Cardiac septum (tissue), 1 donor: ENCODE measurements at regions of chr11 and their contacts with region 1.

Region 1: GRCh38 chr11:60775420-60775961 is 9.6 kb upstream of the MS4A10 start:
- DNase-seq: no peak

Region 2: GRCh38 chr11:60825571-60826189 is 50.2 kb after region 1 on chr11:
- intact Hi-C with region 1: loop called (anchors 5 kb)
- DNase-seq: no peak